Left ventricle myocardium inferior (tissue), 1 donor: ENCODE measurements at regions of chr2 and their contacts with region 1.

Region 1: DNA sequence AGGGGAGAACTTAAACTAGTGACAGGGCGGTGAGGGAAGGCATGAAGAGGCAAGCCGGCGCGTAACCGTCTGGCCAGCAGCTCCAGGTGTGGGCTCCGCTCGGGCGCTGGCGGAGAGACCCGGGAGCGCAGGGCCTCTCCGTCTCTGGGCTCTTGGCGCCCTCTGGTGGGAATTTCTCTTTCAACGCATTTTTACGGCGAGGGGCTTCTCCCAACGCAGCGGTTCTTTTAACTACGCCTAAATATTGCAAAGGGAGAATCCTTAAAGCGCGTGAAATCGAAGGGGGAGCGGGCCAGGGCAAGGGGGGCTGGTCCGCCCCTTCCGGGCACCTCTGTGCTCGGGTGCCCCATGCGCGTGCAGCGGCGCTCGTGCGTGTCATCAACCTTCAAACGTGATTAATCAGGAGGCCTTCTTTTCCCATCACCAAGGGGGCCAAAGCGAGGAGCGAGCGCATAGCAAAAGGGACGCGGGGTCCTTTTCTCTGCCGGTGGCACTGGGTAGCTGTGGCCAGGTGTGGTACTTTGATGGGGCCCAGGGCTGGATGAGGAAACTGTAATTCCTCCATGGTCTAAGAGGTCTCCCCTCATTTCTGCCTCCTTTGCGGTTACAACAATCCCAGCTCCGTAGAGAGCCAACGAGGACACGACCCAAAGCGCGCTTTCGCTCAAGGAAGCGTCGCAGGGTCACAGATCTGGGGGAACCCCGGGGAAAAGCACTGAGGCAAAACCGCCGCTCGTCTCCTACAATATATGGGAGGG is 762 bp upstream of the GAD1 start:
- DNase-seq: peak; percentile 33
- H3K4me3 ChIP-seq: peak overlapping the region; percentile 59
- H3K27ac ChIP-seq: no peak overlapping the region
- H3K4me1 ChIP-seq: peaks cover 65% of the 10 kb centered on the region
- H3K27me3 ChIP-seq: peaks cover 97% of the 10 kb centered on the region
- CTCF ChIP-seq: peak; percentile 80

Region 2: DNA sequence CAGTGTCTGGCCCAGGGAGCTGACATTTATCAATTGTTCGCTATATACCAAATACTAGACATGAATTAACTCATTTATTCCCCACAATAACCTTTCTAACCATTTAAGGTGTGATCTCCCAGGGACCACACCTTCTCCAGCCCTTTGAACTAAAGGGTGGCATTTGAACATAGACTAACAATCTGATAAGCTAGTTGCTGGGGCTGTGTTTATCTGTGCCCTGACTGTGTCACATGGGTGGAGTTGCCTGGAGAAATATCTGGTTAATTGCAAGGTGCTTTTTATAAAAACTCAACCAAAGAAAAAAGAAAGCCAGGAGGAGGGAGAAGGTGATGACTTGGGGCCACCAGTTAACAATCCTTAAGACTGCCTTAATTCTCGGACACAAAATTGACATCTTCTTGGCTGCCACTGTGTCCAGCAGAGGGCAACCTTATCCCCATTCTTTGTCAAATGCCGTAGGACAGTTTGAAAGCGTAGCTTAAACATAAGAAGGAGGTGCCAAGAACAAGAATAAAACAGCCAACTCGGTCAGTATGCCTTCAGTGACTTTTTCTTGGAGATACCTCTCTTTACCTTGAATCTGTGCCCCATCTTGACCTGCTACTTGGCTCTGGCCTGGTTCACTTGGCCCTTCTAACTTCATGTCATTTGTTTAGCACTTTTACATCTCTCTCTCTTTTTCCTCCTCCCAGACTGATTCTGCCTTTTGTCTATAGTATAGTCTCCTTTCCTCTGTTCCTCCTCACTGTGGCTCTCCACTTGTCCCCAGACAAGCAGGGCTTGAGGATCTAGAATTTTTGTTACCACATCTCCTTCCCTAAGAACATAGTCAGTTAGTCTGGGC is 454.6 kb before region 1 on chr2:
- intact Hi-C with region 1: loop called (anchors 10 kb)
- DNase-seq: no peak
- H3K4me3 ChIP-seq: no peak overlapping the region
- H3K27ac ChIP-seq: no peak overlapping the region
- H3K4me1 ChIP-seq: no peaks in the 10 kb centered on the region
- H3K27me3 ChIP-seq: peaks cover 88% of the 10 kb centered on the region
- CTCF ChIP-seq: peak; percentile 69

Region 3: GRCh38 chr2:170409164-170409535 is 406.8 kb before region 1 on chr2:
- intact Hi-C with region 1: loop called (anchors 10 kb)
- DNase-seq: peak; percentile 50
- H3K4me3 ChIP-seq: peak overlapping the region; percentile 33
- H3K27ac ChIP-seq: no peak overlapping the region
- H3K4me1 ChIP-seq: peaks cover 8% of the 10 kb centered on the region
- H3K27me3 ChIP-seq: peaks cover 55% of the 10 kb centered on the region
- CTCF ChIP-seq: peak; percentile 85

Region 4: DNA sequence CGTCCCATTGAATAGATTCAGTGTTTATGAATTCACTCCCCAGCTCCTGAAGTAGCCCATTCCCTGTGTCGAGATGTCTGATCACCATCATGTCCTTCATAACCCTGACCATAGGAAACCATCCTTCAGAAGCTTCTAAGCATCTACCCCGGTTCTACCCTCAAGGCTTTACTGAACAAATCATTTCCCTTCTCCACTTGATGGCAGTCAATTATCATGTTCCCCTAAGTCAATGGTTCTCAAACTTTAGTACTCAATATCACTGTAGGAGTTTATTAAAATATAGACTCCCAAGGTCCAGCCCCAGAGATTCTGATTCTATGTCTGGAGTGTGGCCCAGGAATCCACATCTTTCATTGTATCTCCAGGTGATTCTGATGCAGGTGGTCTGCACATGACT is 329.2 kb before region 1 on chr2:
- intact Hi-C with region 1: loop called (anchors 5 kb)
- DNase-seq: no peak
- H3K4me3 ChIP-seq: no peak overlapping the region
- H3K27ac ChIP-seq: no peak overlapping the region
- H3K4me1 ChIP-seq: no peaks in the 10 kb centered on the region
- H3K27me3 ChIP-seq: peaks cover 4% of the 10 kb centered on the region
- CTCF ChIP-seq: peak; percentile 53